ENCODE measurements at regions of chr6 and their contacts with region 1.

Region 1: GRCh38 chr6:160733050-160733646 is 31.1 kb downstream of the PLG start:
- DNase-seq: no peak
- H3K4me3 ChIP-seq: no peak overlapping the region
- H3K27ac ChIP-seq: no peak overlapping the region
- H3K4me1 ChIP-seq: no peaks in the 10 kb centered on the region
- H3K27me3 ChIP-seq: no peaks in the 10 kb centered on the region
- CTCF ChIP-seq: peak; percentile 31 to 72 (median 56)
- POLR2A ChIP-seq: no peak

Region 2: GRCh38 chr6:160315310-160315709 is 417.8 kb before region 1 on chr6:
- intact Hi-C with region 1: no loop called
- DNase-seq: no peak
- H3K4me3 ChIP-seq: no peak overlapping the region
- H3K27ac ChIP-seq: no peak overlapping the region
- H3K4me1 ChIP-seq: no peaks in the 10 kb centered on the region
- H3K27me3 ChIP-seq: no peaks in the 10 kb centered on the region
- CTCF ChIP-seq: no peak
- POLR2A ChIP-seq: no peak

Region 3: DNA sequence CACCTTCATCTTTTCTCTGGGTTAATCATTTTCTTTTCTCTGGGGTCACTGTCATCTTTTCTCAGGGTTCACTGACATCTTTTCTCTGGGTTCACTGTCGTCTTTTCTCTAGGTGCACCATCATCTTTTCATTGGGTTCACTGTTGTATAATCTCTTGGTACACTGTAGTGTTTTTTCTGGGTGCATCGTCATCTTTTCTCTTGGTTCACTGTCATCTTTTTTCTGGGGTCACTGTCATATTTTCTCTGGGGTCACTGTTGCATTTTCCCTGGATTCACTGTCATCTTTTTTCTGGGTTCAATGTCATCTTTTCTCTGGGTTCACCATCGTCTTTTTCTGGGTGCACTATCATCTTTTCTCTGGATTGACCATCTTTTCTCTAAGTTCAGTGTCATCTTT is 112.6 kb after region 1 on chr6:
- intact Hi-C with region 1: no loop called
- DNase-seq: no peak
- H3K4me3 ChIP-seq: no peak overlapping the region
- H3K27ac ChIP-seq: no peak overlapping the region
- H3K4me1 ChIP-seq: no peaks in the 10 kb centered on the region
- H3K27me3 ChIP-seq: no peaks in the 10 kb centered on the region
- CTCF ChIP-seq: no peak
- POLR2A ChIP-seq: no peak

Region 4: GRCh38 chr6:160919723-160920440 is 186.7 kb after region 1 on chr6:
- intact Hi-C with region 1: loop called (anchors 10 kb)
- DNase-seq: no peak
- H3K4me3 ChIP-seq: no peak overlapping the region
- H3K27ac ChIP-seq: peak overlapping the region in 3 of 4 donors; percentile 45 to 75 (median 72)
- H3K4me1 ChIP-seq: peaks cover 0 to 29% (median 0%) of the 10 kb centered on the region in 3 donors
- H3K27me3 ChIP-seq: no peaks in the 10 kb centered on the region
- CTCF ChIP-seq: no peak
- POLR2A ChIP-seq: no peak

Region 5: DNA sequence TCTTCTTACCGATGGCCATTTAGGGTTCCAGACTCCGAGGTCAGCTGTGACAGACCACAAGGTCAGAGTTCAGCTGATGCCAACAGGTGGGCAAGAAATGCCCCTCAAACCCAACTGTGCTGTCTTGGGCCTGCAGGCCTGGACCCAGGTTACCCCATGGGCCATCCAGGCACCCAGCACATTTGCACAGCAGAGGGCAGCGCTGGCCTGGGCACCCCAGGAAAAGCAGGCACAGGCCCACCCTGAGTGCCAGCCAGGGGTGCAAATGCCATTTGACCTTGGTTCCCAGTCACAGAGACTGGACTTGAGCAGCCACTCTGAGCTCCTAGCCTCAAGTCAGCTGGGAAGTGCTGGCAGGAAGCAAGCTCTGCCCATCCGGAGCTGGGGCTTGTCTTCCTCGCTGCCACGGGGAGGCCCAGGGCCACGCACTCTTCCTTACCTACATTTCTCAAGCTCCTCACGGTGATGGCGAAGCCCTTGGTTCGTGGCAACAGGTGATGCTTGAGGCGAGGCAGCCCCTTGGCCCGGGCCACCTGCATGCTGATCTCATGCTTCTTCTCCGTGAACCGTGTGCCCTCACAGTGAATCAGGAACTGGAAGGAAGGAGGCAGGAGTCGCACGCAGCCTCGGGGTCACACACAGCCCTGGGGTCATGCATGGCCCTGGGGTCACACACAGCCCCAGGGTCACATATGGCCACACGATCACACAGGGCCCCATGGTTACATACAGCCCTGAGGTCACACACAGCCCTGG is 419.9 kb after region 1 on chr6:
- intact Hi-C with region 1: no loop called
- DNase-seq: no peak
- H3K4me3 ChIP-seq: no peak overlapping the region
- H3K27ac ChIP-seq: no peak overlapping the region
- H3K4me1 ChIP-seq: no peaks in the 10 kb centered on the region
- H3K27me3 ChIP-seq: no peaks in the 10 kb centered on the region
- CTCF ChIP-seq: peak in 5 of 6 experiments; percentile 13 to 59 (median 27)
- POLR2A ChIP-seq: no peak